ENCODE measurements at regions of chr14 and their contacts with region 1.

Region 1: DNA sequence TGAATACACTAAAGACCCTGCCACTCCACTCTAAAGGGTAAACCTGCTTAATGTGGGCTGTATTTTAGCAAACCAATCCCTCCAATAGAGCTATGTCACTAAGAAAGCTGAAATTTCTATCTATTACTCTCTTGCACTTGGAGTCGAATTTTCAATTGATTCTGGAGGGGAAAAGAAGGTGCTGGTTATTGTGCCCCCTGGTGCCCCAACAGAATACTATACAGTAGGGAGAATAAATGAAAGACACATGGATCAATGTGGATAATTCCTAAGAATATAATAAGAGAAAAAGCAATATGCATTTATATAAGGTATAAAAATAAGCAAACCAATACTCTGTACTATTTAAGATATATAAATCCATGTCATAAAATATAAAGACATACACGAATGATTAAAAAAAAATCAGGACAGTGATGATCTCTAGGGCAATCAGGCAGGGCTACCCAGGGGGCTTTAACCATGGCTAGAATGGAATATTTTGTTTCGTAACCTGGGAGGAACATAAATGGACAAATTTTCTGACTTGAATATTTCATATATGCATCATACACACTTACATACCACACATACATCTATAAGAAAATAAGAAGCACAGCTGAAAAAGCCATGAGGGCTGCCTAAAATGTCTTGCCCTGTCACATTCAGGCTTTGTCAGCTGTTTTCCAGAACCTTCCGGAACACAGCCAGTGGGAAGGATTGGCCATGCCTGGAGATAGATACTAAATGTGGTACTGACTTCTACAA is 54.4 kb downstream of the EFCAB11 start:
- DNase-seq: peak; percentile 13
- ATAC-seq: peak; percentile 69
- H3K4me3 ChIP-seq: no peak overlapping the region
- H3K27ac ChIP-seq: no peak overlapping the region
- H3K4me1 ChIP-seq: no peaks in the 10 kb centered on the region
- H3K27me3 ChIP-seq: no peaks in the 10 kb centered on the region
- CTCF ChIP-seq: peak; percentile 45
- EP300 ChIP-seq: no peak
- POLR2A ChIP-seq: no peak
- RAD21 ChIP-seq: peak; percentile 35; the same call in 1 of the 2 replicates

Region 2: DNA sequence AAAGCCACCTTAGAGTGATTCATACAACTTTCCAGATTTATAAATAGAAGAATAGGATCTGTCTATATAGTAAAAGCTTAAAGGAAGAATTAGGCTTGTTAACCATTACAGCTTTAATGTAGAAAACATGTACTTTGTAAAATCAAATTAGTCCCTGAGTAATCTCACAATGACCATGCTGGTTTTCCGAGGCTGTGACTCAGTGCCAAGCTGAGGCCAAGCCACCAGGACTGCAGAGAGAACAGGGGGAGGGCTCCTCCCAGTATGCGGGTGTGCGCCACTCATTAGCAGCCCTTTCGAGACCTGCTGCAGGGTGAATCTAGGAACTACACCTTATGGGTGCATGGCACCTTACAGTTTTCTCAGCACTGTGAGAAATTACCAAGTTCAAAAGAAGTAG is 112.6 kb before region 1 on chr14:
- CTCF ChIA-PET with region 1: no interaction called
- POLR2A ChIA-PET with region 1: no interaction called
- in situ Hi-C with region 1: loop called (anchors 10 kb)
- intact Hi-C with region 1: no loop called
- DNase-seq: no peak
- ATAC-seq: no peak
- H3K4me3 ChIP-seq: no peak overlapping the region
- H3K27ac ChIP-seq: no peak overlapping the region
- H3K4me1 ChIP-seq: no peaks in the 10 kb centered on the region
- H3K27me3 ChIP-seq: no peaks in the 10 kb centered on the region
- CTCF ChIP-seq: no peak
- EP300 ChIP-seq: no peak
- POLR2A ChIP-seq: no peak
- RAD21 ChIP-seq: no peak

Measured in HepG2 (cell line).